Ascending aorta (tissue), 2 donors: ENCODE measurements at regions of chr10 and their contacts with region 1.

Region 1: DNA sequence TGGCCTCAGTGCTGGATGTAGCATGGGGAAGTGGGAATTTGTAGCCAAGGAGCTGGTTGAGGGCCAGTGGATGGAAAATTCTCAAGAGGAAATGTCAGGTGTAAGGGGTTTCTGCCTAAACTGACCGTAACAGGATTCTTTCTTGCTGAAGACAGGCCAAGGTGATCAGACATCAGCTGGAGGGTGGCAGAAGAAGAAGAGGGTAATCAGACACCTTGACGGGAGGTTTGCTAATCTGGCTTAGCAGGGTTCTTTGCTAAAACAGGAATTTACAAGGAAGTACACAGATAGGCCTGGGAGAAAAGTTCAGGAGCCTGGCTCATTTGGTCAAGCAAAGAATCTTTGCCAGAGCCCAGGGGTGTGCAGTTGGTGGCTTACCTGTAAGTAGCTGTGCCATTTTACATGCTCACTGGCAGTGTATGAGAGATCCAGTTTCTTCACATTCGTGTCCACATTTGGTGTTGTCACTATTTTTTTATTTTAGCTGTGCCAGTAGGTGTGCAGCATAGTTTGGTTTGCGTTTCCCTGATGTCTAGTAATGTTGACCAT is 73.7 kb downstream of the BMPR1A start:
- DNase-seq: no peak
- H3K4me3 ChIP-seq: no peak overlapping the region
- H3K27ac ChIP-seq: peak overlapping the region; percentile 38 to 68
- H3K4me1 ChIP-seq: peaks cover 0 to 41% of the 10 kb centered on the region in 2 donors
- H3K27me3 ChIP-seq: no peaks in the 10 kb centered on the region
- CTCF ChIP-seq: no peak

Region 2: DNA sequence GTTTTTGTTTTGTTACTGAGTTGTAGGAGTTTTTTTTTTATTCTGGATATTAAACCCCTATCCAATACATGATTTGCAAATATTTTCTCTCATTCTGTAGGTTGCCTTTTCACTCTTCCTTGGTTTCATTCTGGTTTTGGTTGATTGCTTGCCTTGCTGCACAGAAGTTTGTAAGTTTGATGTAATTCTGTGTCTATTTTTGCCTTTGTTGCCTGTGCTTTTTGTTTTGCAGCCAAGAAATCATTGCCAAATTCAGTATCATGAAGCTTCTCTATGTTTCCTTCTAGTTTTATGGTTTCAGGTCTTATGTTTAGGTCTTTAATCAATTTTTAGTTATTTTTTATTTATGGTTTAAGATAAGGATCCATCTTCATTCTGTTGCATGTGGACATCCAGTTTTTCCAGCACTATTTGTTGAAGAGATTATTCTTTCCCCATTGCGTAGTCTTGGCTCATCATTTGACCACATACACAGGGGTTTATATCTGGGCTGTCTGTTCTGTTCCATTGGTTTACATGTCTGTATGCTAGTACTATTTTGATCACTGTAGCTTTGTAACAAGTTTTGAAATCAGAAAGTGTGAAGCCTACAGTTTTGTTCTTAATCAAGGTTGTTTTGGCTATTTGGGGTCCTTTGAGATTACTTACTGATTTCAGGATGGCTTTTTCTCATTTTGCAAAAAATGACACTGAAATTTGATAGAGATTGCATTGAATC is 47.3 kb before region 1 on chr10:
- intact Hi-C with region 1: loop called (anchors 5 kb)
- DNase-seq: no peak
- H3K4me3 ChIP-seq: no peak overlapping the region
- H3K27ac ChIP-seq: peak overlapping the region in 1 of 2 donors; percentile 20
- H3K4me1 ChIP-seq: peaks cover 8 to 17% of the 10 kb centered on the region in 2 donors
- H3K27me3 ChIP-seq: no peaks in the 10 kb centered on the region
- CTCF ChIP-seq: no peak

Region 3: DNA sequence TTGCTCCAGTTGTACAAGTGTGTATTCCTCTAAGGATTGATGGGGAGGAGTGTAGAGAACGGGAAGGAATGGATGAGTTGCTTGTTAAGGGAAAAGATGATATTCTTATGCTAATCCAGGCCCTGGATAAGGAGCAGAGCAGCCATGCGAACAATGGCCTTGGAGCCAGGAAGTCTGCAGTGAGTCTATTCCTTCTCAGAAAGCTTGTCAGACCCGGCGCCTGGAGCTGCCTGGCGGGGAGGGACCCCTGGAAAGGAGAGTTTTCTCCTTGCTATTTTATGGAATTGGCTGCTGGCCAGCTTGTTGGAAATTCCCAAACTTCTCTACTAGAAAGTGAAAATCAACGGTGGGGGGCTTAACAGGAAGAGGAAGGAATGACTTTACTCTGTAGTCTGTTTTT is 38.2 kb after region 1 on chr10:
- intact Hi-C with region 1: loop called (anchors 5 kb)
- DNase-seq: peak in 1 of 2 donors; percentile 67
- H3K4me3 ChIP-seq: no peak overlapping the region
- H3K27ac ChIP-seq: peak overlapping the region; percentile 68 to 70
- H3K4me1 ChIP-seq: peaks cover 0 to 33% of the 10 kb centered on the region in 2 donors
- H3K27me3 ChIP-seq: no peaks in the 10 kb centered on the region
- CTCF ChIP-seq: no peak